ENCODE measurements at regions of chr15 and their contacts with region 1.

Region 1: DNA sequence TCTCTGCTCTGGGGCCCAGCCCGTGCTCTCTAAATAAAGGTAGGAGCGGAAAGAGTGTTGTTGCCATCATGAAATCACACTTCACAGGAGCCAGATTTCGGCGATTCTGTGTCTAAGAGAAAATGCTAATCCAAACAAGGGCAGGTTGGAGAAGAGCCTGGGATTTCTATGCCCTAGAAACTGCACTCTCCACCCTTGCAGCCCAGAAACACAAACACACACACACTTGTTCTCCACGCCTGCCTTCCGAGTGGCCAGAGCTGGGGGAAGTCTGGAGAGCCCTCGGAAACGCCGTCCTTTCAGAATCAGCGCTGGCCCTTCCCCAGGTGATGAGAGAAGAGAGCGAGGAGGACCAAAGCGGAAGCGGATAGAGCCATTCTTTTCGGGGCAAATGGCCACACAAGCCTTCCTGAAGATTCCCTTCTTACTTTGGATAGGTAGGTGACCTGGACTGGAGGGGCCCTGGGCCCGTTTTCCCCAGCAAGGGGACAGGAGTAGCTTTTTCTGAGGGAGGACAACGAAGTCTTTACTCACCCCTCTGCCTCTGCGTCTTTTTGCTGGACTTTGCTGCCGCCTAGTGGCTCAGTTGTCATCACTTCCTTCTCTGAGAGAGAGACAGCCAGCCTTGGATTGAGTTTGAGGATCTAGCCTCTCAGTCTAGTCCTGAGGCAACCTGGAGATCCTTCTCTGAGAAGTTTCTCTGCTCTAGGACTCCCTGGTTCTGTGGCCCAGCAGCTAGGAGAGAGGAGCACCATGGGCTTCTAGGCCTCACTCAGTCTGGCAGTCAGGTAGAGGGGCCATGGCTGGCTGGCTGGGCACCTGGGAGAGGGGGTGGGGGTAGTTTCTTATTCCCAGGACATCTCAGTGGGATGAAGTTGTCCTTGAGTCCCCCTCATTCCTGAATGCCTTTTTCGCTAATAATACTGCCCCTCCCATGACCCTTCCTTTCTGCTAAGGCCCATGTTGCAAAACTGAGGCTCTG is 37.7 kb downstream of the SENP8 start:
- DNase-seq: peak; percentile 87
- ATAC-seq: peak; percentile 97

Region 2: GRCh38 chr15:71743861-71744382 is 412.0 kb before region 1 on chr15:
- intact Hi-C with region 1: loop called (anchors 10 kb)
- DNase-seq: no peak
- ATAC-seq: peak; percentile 65